ENCODE measurements at regions of chr12 and their contacts with region 1.

Region 1: GRCh38 chr12:101830367-101831325 is at the start of gene GNPTAB:
- DNase-seq: peak; percentile 98
- ATAC-seq: peak; percentile 95
- H3K4me3 Mint-ChIP-seq: peak within 1 kb of the TSS; percentile 95
- H3K27ac Mint-ChIP-seq: peak within 1 kb of the TSS; percentile 91
- H3K4me1 Mint-ChIP-seq: peaks cover 41% of the 10 kb centered on the region
- H3K27me3 Mint-ChIP-seq: no peaks in the 10 kb centered on the region
- total RNA-seq, gene GNPTAB: 20.4 to 24.0 TPM

Region 2: GRCh38 chr12:101407436-101408345 is 423.0 kb before region 1 on chr12 and contains the start of gene ARL1:
- CTCF ChIA-PET with region 1: interaction called, 5 read pairs
- POLR2A ChIA-PET with region 1: no interaction called
- intact Hi-C with region 1: loop called (anchors 2 to 10 kb)
- DNase-seq: peak; percentile 91
- ATAC-seq: peak; percentile 83
- H3K4me3 Mint-ChIP-seq: peak within 1 kb of the TSS; percentile 95
- H3K27ac Mint-ChIP-seq: peak within 1 kb of the TSS; percentile 95
- H3K4me1 Mint-ChIP-seq: peaks cover 15% of the 10 kb centered on the region
- H3K27me3 Mint-ChIP-seq: no peaks in the 10 kb centered on the region
- total RNA-seq, gene ARL1: 67.2 to 85.6 TPM

Region 3: DNA sequence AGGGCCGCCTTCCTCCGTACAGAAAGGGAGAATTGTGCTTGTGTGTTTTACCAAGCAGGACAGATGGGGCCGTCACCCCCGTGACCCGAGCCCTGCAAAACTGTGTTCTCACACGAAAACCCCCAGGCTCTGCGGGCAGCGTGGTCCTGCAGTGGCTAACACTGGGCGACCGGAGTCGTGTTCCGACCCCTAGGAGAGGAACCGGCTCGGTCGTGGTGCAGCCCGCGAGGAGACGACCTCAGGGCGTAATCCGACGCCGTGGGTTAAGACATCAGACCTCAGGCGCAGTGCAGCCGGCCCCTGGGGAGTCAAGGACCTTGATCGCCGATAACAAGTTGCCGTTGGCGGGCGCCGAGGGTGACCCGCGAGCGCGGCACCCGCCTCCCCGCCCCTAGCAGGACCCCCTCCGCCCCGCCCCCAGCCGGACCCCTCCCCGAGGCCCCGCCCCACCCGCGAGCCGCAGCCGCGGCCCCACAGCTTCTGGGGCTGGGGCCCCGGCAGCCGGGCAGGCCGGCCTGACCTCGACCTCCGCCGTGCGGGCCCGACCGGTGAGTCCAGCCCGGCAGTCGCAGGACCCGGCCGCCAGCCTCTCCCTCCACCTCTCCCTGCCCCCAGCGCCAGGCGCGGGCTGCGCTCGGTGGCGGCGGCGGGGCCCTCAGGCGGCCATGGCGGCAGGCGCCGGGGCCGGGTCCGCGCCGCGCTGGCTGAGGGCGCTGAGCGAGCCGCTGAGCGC is 133.3 kb before region 1 on chr12 and contains the start of gene CHPT1:
- CTCF ChIA-PET with region 1: no interaction called
- POLR2A ChIA-PET with region 1: no interaction called
- intact Hi-C with region 1: loop called in 1 of 2 experiments (anchors 1 kb)
- DNase-seq: peak; percentile 76
- ATAC-seq: peak; percentile 74
- H3K4me3 Mint-ChIP-seq: peak within 1 kb of the TSS; percentile 81
- H3K27ac Mint-ChIP-seq: peak within 1 kb of the TSS; percentile 83
- H3K4me1 Mint-ChIP-seq: peaks cover 29% of the 10 kb centered on the region
- H3K27me3 Mint-ChIP-seq: no peaks in the 10 kb centered on the region
- total RNA-seq, gene CHPT1: 12.2 to 15.2 TPM

Region 4: GRCh38 chr12:101782273-101782731 is 48.3 kb before region 1 on chr12:
- CTCF ChIA-PET with region 1: interaction called, 32 read pairs
- POLR2A ChIA-PET with region 1: interaction called, 5 read pairs
- intact Hi-C with region 1: no loop called
- DNase-seq: peak; percentile 28
- ATAC-seq: peak; percentile 71
- H3K4me3 Mint-ChIP-seq: no peak overlapping the region
- H3K27ac Mint-ChIP-seq: peak overlapping the region; percentile 86
- H3K4me1 Mint-ChIP-seq: peaks cover 24% of the 10 kb centered on the region
- H3K27me3 Mint-ChIP-seq: no peaks in the 10 kb centered on the region

Region 5: GRCh38 chr12:101876861-101877815 is 46.5 kb after region 1 on chr12 and contains the start of gene DRAM1:
- CTCF ChIA-PET with region 1: no interaction called
- POLR2A ChIA-PET with region 1: no interaction called
- intact Hi-C with region 1: loop called (anchors 2 to 5 kb)
- DNase-seq: peak; percentile 85
- ATAC-seq: peak; percentile 91
- H3K4me3 Mint-ChIP-seq: peak within 1 kb of the TSS; percentile 75
- H3K27ac Mint-ChIP-seq: peak within 1 kb of the TSS; percentile 59
- H3K4me1 Mint-ChIP-seq: peaks cover 6% of the 10 kb centered on the region
- H3K27me3 Mint-ChIP-seq: peaks cover 3% of the 10 kb centered on the region
- total RNA-seq, gene DRAM1: 2.3 to 2.4 TPM

Region 6: GRCh38 chr12:102119674-102120563 is 289.3 kb after region 1 on chr12 and contains the starts of genes NUP37 and PARPBP:
- CTCF ChIA-PET with region 1: no interaction called
- POLR2A ChIA-PET with region 1: no interaction called
- intact Hi-C with region 1: loop called in 1 of 2 experiments (anchors 2 kb)
- DNase-seq: peak; percentile 96
- ATAC-seq: peak; percentile 93
- H3K4me3 Mint-ChIP-seq: peak within 1 kb of the TSS; percentile 95
- H3K27ac Mint-ChIP-seq: peak within 1 kb of the TSS; percentile 95
- H3K4me1 Mint-ChIP-seq: peaks cover 19% of the 10 kb centered on the region
- H3K27me3 Mint-ChIP-seq: no peaks in the 10 kb centered on the region
- total RNA-seq, gene NUP37: 100 to 108 TPM
- total RNA-seq, gene PARPBP: 21.7 to 26.4 TPM

Region 7: GRCh38 chr12:102144221-102144620 is 313.6 kb after region 1 on chr12:
- CTCF ChIA-PET with region 1: no interaction called
- POLR2A ChIA-PET with region 1: no interaction called
- intact Hi-C with region 1: no loop called
- DNase-seq: no peak
- ATAC-seq: no peak
- H3K4me3 Mint-ChIP-seq: no peak overlapping the region
- H3K27ac Mint-ChIP-seq: no peak overlapping the region
- H3K4me1 Mint-ChIP-seq: peaks cover 9% of the 10 kb centered on the region
- H3K27me3 Mint-ChIP-seq: no peaks in the 10 kb centered on the region

Region 8: GRCh38 chr12:103128862-103129501 is 1298.3 kb after region 1 on chr12:
- CTCF ChIA-PET with region 1: no interaction called
- POLR2A ChIA-PET with region 1: no interaction called
- intact Hi-C with region 1: no loop called
- DNase-seq: no peak
- ATAC-seq: no peak
- H3K4me3 Mint-ChIP-seq: no peak overlapping the region
- H3K27ac Mint-ChIP-seq: no peak overlapping the region
- H3K4me1 Mint-ChIP-seq: no peaks in the 10 kb centered on the region
- H3K27me3 Mint-ChIP-seq: peaks cover 5% of the 10 kb centered on the region

Measured in activated CD4-positive, alpha-beta T cell treated with anti-CD3 and anti-CD28 coated beads for 36 hours (primary cell).